Calu3 (cell line): ENCODE measurements at regions of chr16 and their contacts with region 1.

Region 1: GRCh38 chr16:49883076-49884014 is 27.4 kb upstream of the ZNF423 start:
- DNase-seq: no peak
- H3K4me3 Mint-ChIP-seq: no peak overlapping the region
- H3K27ac Mint-ChIP-seq: no peak overlapping the region
- H3K4me1 Mint-ChIP-seq: peaks cover 9% of the 10 kb centered on the region
- H3K27me3 Mint-ChIP-seq: peaks cover 75% of the 10 kb centered on the region
- CTCF ChIP-seq: no peak

Region 2: GRCh38 chr16:49896447-49896964 is 13.2 kb after region 1 on chr16:
- CTCF ChIA-PET with region 1: no interaction called
- intact Hi-C with region 1: no loop called
- DNase-seq: no peak
- H3K4me3 Mint-ChIP-seq: no peak overlapping the region
- H3K27ac Mint-ChIP-seq: no peak overlapping the region
- H3K4me1 Mint-ChIP-seq: no peaks in the 10 kb centered on the region
- H3K27me3 Mint-ChIP-seq: peaks cover 83% of the 10 kb centered on the region
- CTCF ChIP-seq: no peak

Region 3: DNA sequence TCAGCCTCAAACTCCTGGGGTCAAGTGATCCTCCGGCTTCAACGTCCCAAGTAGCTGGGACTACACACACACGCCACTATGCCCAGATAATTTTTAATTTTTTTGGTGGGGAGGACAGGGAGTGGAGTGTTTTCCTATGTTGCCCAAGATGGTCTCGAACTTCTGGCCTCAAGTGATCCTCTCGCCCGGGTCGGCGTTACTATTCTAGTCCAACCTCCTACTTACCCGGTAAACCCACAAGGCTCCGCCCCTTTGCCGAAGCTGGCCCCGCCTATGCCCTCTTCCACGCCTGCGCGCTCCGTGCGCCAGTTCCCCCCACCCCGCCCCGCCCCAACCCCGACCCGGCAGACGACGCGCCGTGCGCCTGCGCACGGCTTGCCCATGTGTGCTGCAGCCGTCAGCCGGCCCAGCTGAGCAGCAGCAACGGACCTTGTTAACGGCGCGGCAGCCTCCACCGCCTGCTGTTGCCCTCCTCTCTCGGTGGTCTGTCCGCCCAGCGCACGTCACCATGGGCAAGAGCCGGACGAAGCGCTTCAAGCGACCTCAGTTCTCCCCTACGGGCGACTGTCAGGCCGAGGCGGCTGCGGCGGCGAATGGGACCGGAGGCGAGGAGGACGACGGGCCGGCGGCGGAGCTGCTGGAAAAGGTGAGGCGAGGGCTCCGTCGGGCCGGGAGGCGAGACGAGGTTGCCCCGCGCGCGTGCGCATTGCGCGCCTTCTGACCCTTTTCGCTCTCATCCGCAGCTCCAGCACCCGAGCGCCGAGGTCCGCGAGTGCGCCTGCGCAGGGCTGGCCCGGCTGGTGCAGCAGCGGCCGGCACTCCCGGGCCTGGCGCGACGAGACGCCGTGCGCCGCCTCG is 182.5 kb after region 1 on chr16 and contains the start of gene HEATR3:
- CTCF ChIA-PET with region 1: interaction called, 10 read pairs
- intact Hi-C with region 1: no loop called
- DNase-seq: peak; percentile 97
- H3K4me3 Mint-ChIP-seq: peak within 1 kb of the TSS; percentile 75
- H3K27ac Mint-ChIP-seq: peak within 1 kb of the TSS; percentile 42
- H3K4me1 Mint-ChIP-seq: peaks cover 25% of the 10 kb centered on the region
- H3K27me3 Mint-ChIP-seq: no peaks in the 10 kb centered on the region
- CTCF ChIP-seq: no peak
- total RNA-seq, gene HEATR3: 27.3 and 28.3 TPM in 2 replicates